MCF 10A (cell line): ENCODE measurements at regions of chr2 and their contacts with region 1.

Region 1: DNA sequence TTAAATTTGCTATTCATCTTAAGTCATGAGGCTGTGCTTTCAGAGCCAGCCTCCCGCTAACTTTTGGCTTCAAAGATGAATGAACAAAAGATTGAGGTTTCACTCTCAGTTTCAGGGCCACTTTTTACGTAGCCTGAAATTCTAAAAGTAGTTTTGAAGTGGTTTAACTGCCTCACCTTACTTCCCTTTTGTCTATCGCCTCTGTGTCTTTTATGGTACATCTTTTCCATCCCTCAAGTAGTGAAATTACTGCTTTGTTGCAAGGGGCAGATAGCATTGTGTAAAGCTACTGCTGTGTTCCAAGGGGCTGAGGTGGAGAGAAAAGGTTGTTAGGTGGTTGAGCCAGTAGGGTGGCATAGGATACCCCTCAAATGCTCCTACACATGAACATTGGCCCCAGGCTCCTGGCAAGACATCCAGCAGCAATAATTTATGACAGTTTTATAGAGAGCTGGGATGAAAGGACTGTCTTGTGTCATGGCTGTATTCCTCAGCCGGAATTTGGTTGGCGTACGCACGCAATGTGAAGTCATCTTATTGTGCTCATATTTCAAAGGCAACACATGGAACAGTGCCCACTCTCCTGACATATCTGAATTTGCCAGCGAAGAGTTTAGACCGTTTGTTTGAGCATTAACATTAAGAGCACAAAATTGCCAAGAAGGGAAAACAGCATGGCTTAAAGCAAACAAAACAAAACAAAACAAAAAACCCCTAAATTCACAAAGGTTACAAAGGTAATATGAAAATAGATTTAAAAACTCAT is 32.2 kb downstream of the QPCT start:
- DNase-seq: peak; percentile 79
- H3K4me3 Mint-ChIP-seq: peak overlapping the region; percentile 55
- H3K27ac Mint-ChIP-seq: peak overlapping the region; percentile 61
- H3K4me1 Mint-ChIP-seq: peaks cover 27% of the 10 kb centered on the region
- H3K27me3 Mint-ChIP-seq: no peaks in the 10 kb centered on the region
- CTCF ChIP-seq: no peak

Region 2: GRCh38 chr2:37361216-37361815 is 15.3 kb before region 1 on chr2:
- CTCF ChIA-PET with region 1: interaction called, 5 read pairs
- POLR2A ChIA-PET with region 1: interaction called, 26 read pairs
- intact Hi-C with region 1: no loop called
- DNase-seq: peak; percentile 48
- H3K4me3 Mint-ChIP-seq: no peak overlapping the region
- H3K27ac Mint-ChIP-seq: peak overlapping the region; percentile 20
- H3K4me1 Mint-ChIP-seq: peaks cover 6% of the 10 kb centered on the region
- H3K27me3 Mint-ChIP-seq: no peaks in the 10 kb centered on the region
- CTCF ChIP-seq: no peak